B cell (primary cell): ENCODE measurements at regions of chr10 and their contacts with region 1.

Region 1: DNA sequence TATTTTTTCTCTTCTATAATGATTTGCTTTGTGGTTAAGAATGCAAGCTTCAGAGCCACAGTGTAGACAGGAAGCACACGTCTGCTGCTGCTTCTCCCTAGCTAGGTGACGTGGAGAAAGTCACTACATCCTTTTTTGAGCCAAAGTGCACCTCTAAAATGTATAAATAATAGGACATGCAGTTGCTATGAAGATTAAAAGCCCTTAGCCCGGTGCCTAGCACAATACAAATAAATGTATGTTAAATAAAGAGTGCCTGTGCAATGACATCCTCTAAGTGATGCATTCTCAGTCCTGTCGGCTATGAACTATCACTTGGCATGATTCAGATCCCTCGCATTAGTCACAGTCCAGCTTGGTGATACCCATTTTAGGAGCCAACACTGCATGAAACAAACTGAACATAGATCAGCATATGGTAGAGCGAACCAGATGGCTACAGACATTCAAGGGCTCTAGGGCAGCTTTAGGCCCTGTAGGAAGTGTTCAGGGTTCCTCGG is 4.8 kb upstream of the TRDMT1 start:
- DNase-seq: peak; percentile 74
- ATAC-seq: peak; percentile 45
- H3K4me3 ChIP-seq: no peak overlapping the region
- H3K4me3 Mint-ChIP-seq: peak overlapping the region; percentile 43
- H3K27ac ChIP-seq: peak overlapping the region in 1 of 2 donors; percentile 42
- H3K27ac Mint-ChIP-seq: peak overlapping the region; percentile 78
- H3K4me1 ChIP-seq: peaks cover 9 to 19% of the 10 kb centered on the region in 2 donors
- H3K4me1 Mint-ChIP-seq: peaks cover 14% of the 10 kb centered on the region
- H3K27me3 ChIP-seq: no peaks in the 10 kb centered on the region
- H3K27me3 Mint-ChIP-seq: no peaks in the 10 kb centered on the region
- CTCF ChIP-seq: no peak

Region 2: DNA sequence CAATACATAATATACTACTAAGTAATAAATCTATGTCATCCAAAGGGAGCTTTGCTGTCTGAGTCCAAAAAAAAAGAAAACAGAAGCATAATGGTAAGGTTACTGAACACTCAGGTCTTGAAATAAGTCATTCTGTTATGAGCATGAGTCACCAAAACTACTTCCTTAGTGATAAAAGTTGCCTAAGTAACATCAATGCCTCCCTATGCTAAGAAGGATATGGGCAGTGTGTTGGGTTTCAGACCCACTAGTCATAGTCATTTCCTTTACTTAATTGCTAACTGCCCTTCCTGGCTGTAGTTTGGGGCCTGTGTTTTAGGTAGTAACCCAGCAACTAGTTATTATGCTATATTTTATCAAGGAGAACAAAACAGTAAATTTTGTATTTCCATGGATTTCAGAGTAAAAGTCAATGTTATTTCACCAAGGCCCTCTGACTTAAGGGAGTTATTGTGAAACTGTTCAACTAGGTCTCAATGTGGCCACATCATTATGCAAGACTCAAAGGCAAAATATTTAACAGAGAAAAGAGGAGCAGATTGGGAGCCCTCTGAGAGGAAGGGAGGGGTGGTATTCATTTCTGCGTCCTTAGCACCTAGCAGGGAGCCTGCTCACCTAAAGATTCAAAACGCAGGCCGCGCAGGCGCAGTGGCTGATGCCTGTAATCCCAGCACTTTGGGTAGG is 10.1 kb after region 1 on chr10:
- CTCF ChIA-PET with region 1: interaction called, 6 read pairs
- POLR2A ChIA-PET with region 1: no interaction called
- intact Hi-C with region 1: loop called (anchors 1 kb)
- DNase-seq: no peak
- ATAC-seq: peak; percentile 76
- H3K4me3 ChIP-seq: no peak overlapping the region
- H3K4me3 Mint-ChIP-seq: no peak overlapping the region
- H3K27ac ChIP-seq: no peak overlapping the region
- H3K27ac Mint-ChIP-seq: peak overlapping the region; percentile 61
- H3K4me1 ChIP-seq: peaks cover 0 to 6% of the 10 kb centered on the region in 2 donors
- H3K4me1 Mint-ChIP-seq: peaks cover 7% of the 10 kb centered on the region
- H3K27me3 ChIP-seq: no peaks in the 10 kb centered on the region
- H3K27me3 Mint-ChIP-seq: no peaks in the 10 kb centered on the region
- CTCF ChIP-seq: no peak